ENCODE measurements at regions of chr2 and their contacts with region 1.

Region 1: GRCh38 chr2:147843864-147844696 is 749 bp upstream of the ACVR2A start:
- DNase-seq: peak; percentile 87
- H3K4me3 ChIP-seq: peak overlapping the region; percentile 72 to 90 (median 88)
- H3K27ac ChIP-seq: peak overlapping the region; percentile 86
- H3K4me1 ChIP-seq: no peaks in the 10 kb centered on the region
- H3K27me3 ChIP-seq: no peaks in the 10 kb centered on the region
- CTCF ChIP-seq: peak in 1 of 2 donors; percentile 42

Region 2: DNA sequence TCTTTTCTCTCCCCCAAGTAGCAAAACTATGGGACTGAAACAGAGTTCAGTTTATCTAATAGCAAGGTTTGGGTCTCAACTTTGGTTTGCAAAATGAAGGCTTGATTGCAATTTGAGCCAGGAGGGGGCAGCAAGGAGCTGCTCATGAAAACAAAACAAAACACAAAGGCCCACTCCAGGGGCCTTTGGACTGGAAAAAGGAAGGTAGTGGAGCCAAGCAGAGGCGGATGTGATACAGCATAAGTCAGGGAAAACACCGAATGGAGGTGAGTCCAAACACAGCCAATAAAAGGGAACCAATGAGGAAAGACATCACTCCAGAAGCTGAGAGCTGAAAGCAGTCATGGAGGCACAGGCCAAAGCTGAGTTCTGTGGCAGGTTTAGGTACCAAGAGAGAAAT is 799.0 kb before region 1 on chr2:
- CTCF ChIA-PET with region 1: no interaction called
- dilution Hi-C with region 1: no loop called
- in situ Hi-C with region 1: no loop called
- intact Hi-C with region 1: loop called (anchors 10 kb)
- DNase-seq: peak; percentile 69
- H3K4me3 ChIP-seq: no peak overlapping the region
- H3K27ac ChIP-seq: no peak overlapping the region
- H3K4me1 ChIP-seq: no peaks in the 10 kb centered on the region
- H3K27me3 ChIP-seq: no peaks in the 10 kb centered on the region
- CTCF ChIP-seq: peak; percentile 63 to 78

Region 3: DNA sequence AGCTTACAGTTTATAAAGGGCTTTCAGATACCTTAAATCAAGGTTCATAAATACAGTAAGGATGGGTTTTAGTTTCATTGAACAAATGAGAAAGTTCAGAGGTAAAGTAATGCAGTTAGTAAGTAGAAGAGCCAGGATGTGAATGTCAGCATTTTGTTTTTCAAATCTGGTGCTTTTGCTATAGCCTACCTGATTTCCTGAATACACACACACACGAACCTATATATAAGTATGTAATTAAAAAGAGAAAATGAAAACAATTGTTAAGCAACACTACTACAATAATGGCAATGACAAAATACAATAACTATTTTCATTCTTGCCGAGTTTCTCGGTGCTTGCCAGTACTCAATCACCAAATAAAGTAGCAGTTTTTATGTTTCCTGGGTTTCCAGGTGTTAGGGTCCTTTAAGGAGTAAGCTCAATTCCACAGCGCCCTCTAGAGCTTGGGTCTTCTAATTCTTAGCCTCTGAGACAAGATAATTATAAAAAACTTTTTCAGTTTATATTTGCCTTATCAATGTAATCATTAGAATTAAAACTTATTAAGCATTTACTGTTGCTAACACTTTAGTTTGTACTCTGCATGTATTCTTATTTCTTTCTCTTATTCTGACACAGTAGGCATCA is 512.2 kb before region 1 on chr2:
- CTCF ChIA-PET with region 1: no interaction called
- dilution Hi-C with region 1: no loop called
- in situ Hi-C with region 1: no loop called
- intact Hi-C with region 1: loop called (anchors 10 kb)
- DNase-seq: peak; percentile 42
- H3K4me3 ChIP-seq: no peak overlapping the region
- H3K27ac ChIP-seq: no peak overlapping the region
- H3K4me1 ChIP-seq: no peaks in the 10 kb centered on the region
- H3K27me3 ChIP-seq: no peaks in the 10 kb centered on the region
- CTCF ChIP-seq: peak; percentile 61 to 73

Region 4: DNA sequence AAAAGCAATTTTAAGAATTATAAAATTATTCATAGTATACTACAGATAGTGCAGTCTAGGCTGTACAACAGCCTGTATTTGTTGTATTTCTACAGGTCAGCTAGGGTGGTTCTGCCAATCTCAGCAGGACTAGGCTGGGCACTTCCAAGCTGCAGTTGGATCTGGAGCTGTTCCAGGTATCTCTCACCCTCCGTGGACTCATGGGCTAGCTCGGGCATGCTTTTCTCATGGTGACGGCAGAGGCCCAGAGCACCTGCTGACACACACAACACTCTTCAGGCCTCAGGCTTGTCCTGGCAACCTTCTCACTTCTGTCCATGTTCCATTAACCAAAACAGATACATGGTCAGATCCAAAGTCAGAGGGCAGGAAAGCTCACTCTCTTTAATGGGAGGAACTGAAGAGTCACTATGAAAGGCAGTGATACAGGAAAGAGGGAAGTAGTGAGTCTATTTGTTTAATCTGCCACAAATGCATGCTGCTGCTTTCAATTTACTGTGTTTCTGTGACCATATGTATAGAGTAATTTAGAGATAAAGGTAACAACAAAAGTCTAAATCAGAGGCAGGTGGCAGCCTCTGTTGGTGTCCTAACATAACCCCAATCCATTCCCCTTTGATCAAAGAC is 461.6 kb before region 1 on chr2:
- CTCF ChIA-PET with region 1: no interaction called
- dilution Hi-C with region 1: no loop called
- in situ Hi-C with region 1: no loop called
- intact Hi-C with region 1: loop called (anchors 10 kb)
- DNase-seq: peak; percentile 97
- H3K4me3 ChIP-seq: no peak overlapping the region
- H3K27ac ChIP-seq: peak overlapping the region; percentile 54
- H3K4me1 ChIP-seq: peaks cover 15% of the 10 kb centered on the region
- H3K27me3 ChIP-seq: no peaks in the 10 kb centered on the region
- CTCF ChIP-seq: no peak

Region 5: DNA sequence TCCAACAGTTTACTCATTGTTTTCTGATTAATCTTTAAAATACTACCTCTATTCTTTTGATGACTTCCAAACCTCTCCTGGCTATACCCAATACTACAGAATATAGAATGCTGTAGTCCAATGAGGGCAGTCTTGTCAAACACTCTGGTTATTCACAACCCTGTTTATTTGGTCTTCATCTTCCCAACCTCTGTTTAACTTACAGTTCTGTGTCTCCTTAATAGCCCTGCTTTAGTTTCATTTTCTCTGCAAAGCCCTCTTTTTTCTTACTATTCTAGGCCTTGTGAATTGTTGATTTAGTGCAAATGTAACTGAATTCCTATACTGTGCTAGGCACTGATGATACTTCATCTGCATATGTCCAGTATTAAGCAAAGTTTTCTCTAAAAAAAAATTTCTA is 40.8 kb after region 1 on chr2:
- CTCF ChIA-PET with region 1: no interaction called
- dilution Hi-C with region 1: no loop called
- in situ Hi-C with region 1: no loop called
- intact Hi-C with region 1: loop called (anchors 2 kb)
- DNase-seq: no peak
- H3K4me3 ChIP-seq: no peak overlapping the region
- H3K27ac ChIP-seq: no peak overlapping the region
- H3K4me1 ChIP-seq: no peaks in the 10 kb centered on the region
- H3K27me3 ChIP-seq: no peaks in the 10 kb centered on the region
- CTCF ChIP-seq: no peak

Measured in mammary epithelial cell (primary cell).